AG04449 (cell line): ENCODE measurements at regions of chr9 and their contacts with region 1.

Region 1: DNA sequence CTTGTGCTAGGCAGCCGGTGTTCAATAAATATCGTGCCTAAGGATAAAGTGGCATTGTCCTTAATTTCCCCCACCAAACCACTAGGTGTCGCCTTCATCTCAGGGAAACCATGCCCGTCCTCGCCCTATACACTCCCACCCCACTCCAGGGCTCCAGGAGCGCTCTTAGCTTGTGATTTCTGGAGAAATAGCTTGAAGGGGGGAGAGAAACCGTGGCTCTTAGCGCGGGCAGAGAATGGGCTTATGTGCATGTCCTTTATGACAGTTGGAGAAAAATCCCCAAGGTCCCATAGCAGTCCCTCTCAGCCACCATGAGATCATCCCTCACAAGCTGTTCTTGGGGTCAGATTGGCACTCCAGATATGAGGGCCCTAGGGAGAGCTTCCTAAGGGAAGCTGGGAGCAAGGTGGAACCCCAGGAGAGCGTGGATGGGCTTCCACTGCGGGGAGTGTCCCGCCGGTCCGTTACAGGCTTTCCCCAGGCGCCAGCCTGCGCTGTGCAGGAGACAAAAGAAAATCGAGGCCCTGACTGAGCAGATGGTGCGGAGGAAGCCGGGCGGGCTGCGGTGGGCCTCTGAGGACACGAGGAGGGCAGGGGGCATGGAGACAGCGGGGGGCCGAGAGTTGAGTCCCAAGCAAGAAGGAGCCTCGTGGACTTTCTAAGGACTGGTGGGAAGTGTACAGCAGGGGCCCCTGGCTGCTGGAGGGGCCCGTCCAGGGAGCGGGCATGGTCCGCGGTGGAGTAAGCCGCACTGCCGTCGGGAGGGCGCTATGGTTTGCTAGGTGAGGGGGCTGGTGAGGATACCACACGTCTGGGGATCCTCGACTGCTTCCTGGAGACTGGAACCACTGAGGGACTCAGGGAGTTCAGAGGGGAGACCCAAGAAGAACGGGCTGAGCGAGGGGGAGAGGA is 750 bp upstream of the NPR2 start:
- DNase-seq: peak; percentile 31
- H3K4me3 ChIP-seq: peak overlapping the region; percentile 42
- CTCF ChIP-seq: peak; percentile 82

Region 2: DNA sequence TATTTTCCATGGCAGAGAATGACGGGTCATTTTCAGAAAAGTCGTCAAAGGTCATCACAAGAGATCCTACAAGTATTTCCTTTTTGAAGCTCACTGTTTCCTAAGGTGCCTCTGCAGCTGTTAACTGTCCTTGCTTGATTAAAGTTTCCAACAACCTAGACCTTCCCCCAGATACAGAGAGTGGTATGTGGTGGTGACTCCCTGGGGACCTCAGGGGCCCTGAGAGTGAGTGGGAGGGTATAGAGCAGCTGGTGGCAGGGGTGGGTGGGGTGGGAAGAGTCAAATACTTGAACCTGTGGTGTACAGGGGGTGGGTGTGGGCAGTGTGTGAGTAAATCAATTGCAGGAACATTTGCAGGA is 170.9 kb before region 1 on chr9:
- CTCF ChIA-PET with region 1: no interaction called
- POLR2A ChIA-PET with region 1: no interaction called
- DNase-seq: no peak
- H3K4me3 ChIP-seq: no peak overlapping the region
- CTCF ChIP-seq: no peak

Region 3: GRCh38 chr9:35748858-35749514 is 41.7 kb before region 1 on chr9 and contains the starts of genes GBA2 and RGP1:
- CTCF ChIA-PET with region 1: interaction called, 10 read pairs
- POLR2A ChIA-PET with region 1: interaction called, 3 read pairs
- DNase-seq: no peak
- H3K4me3 ChIP-seq: peak within 1 kb of the TSS; percentile 89
- CTCF ChIP-seq: no peak

Region 4: DNA sequence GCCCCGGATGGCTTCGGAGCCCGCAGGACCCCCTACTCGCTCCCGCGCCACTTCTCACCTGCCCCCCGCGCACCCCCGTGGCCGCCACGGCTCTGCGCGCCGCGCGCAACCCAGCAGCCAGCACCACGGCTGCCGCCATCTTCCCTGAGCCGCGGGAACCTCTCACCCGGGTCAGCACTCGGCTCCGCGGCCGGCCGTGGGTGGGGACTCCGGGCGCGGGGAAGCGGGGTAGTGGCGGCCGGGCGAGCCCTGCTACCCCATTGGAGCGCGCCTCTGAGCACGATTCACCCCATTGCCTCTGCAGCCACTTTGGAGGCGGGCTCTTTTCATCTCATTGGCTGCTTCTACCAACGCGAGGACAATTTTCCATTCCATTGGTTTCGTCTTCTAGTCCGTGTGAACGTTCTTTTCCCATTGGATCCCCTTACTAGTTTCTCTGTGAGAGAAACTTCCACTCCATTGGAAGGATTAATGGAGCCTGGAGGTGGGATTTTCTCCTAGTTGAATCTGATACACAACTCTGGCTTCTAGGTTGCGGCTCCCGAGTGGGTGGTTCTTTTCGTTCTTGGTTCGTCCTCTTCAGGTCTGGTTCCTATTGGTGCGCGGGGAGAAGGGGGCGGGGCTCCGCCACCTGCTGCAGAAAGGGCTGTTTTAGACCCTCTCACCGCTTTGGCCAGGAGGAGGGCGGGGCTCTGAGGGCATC is 24.4 kb after region 1 on chr9 and contains the start of gene HINT2:
- CTCF ChIA-PET with region 1: interaction called, 201 read pairs
- POLR2A ChIA-PET with region 1: interaction called, 4 read pairs
- DNase-seq: peak; percentile 94
- H3K4me3 ChIP-seq: peak within 1 kb of the TSS; percentile 87
- CTCF ChIP-seq: no peak

Region 5: GRCh38 chr9:35882263-35882848 is 91.7 kb after region 1 on chr9:
- CTCF ChIA-PET with region 1: interaction called, 131 read pairs
- POLR2A ChIA-PET with region 1: interaction called, 3 read pairs
- DNase-seq: no peak
- H3K4me3 ChIP-seq: no peak overlapping the region
- CTCF ChIP-seq: peak; percentile 93

Region 6: DNA sequence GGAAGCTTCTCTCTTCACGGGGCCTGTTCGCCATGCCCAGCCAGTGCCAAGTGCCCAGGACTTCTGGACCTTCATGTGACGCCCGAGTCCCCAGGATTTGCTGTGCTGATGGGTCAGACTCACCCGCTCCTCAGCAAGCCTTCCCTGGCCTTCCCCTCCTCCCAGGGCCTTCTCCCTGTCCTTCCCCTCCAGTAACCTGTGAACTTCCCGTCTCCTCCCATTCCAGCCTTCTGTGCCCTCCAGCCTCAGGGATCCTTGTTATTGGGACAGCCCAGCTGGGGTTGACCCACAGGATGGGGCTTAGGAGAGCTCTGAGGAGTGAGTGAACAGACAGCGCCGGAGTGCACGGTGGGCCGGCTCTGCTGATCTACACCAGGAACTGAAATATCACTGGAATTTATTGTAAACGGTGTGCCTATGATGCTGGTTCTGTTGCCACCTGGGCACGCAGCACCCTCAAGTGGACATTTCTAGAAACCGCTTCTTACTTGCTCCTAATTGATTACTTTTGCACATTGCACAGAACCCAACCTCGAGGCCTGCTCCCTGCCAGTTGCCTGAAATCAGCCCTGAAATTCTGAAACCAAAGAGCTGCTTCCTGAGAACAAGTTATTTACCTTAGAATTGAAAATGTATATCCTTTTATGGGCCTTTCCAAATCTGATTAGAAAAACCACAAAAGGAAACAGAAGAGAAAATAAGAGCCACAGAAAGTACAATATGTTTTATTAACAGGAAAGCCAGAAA is 120.1 kb after region 1 on chr9:
- CTCF ChIA-PET with region 1: interaction called, 27 read pairs
- POLR2A ChIA-PET with region 1: interaction called, 7 read pairs
- DNase-seq: no peak
- H3K4me3 ChIP-seq: no peak overlapping the region
- CTCF ChIP-seq: peak; percentile 41

Region 7: DNA sequence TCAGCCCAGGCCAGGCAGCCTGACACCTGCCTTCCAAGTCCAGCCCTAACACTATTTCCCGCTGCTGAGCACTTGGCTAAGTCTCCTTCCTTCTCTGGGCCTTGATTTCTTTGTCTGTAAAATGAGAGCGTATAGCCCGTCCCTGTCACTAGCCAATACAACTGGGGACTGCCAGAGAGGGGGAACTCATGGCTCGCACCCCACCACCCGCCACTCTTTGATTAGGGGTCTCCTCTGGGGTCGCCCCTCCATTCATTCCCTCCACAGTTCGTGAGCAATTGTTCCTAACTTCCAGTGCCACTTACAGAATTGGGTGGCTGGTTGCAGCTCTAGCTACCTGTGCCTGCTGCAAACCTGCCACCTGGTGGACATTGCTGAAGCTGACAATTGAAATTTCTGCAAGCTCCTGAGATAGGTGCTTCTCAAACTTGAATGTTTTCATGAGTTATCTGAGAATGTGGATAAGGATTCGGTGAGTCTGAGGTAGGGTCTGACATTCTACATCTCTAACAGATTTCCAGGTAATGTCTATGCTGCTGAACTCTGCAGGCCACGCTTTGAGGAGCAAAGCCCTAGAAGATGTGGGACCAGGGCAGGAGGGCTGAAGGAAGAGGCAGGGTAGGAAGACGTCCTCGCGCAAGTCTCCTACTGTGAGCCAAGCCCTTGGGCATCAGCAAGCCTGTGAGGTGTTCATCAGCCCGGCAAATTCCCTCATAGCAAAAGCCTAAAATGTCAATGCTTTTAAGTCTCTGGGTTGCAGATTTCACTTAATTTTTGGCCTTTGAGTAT is 232.8 kb after region 1 on chr9:
- CTCF ChIA-PET with region 1: interaction called, 27 read pairs
- POLR2A ChIA-PET with region 1: no interaction called
- DNase-seq: no peak
- H3K4me3 ChIP-seq: no peak overlapping the region
- CTCF ChIP-seq: peak; percentile 81